H1 (cell line): ENCODE measurements at regions of chr10 and their contacts with region 1.

Region 1: GRCh38 chr10:100481462-100482081 is 18.8 kb downstream of the WNT8B start:
- DNase-seq: peak; percentile 77 to 97
- H3K4me3 ChIP-seq: peak overlapping the region; percentile 35 to 59 (median 53)
- H3K27ac ChIP-seq: no peak overlapping the region
- H3K4me1 ChIP-seq: peaks cover 11 to 26% (median 19%) of the 10 kb centered on the region in 4 experiments
- H3K27me3 ChIP-seq: peaks cover 59 to 77% (median 70%) of the 10 kb centered on the region in 4 experiments
- CTCF ChIP-seq: peak in 2 of 3 experiments; percentile 4 to 7; a peak in 1 of 4 replicates
- EP300 ChIP-seq: no peak
- POLR2A ChIP-seq: no peak
- RAD21 ChIP-seq: 0 out of 4 replicates have a peak, but pooled peaks of 1 of the 2 experiments have one; percentile 4

Region 2: DNA sequence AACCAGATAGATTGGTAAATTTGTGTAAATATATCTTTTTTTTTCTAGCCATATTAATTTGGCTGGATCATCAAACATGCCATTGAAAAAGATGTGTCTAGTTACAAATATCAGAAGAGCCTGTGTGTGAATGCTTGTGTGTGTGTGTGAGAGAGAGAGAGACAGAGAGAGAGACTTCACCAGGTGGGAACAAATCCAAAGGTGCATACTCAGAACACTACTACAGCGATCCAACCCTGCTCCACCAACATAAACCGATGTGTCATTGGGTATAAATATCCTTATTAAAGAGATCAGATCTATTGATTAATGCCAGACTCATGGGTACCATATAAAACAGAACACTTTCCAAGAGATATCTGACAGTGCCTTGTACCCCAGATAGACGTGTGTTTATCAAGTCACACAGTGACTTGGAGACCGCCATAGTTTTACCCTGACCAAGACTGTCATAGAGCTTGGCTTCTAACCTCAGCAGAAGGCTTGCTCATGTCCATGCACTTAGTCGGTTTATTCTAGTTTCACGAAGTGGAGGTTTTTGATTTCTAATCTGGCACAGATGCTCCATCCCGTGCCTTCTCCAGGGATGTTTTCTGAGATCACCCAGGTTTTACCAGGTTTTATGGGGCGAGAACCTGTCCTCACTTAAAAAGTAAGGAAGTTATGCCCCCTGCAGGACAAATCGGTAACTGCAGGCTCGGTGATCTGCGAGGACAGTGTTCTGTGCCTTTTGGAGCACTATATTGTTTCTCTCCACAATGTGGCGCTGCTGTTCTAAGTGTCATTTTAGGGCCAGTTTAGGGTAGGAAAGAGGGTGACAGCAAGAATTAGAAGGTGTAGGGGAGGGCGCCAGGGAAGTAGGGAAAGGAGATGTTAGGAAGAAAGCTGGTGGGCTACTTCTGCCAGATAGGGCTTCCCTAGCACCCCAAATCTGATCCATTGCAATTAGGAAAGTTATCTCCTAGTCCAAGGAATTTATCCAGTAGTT is 48.0 kb before region 1 on chr10:
- CTCF ChIA-PET with region 1: interaction called, 19 read pairs
- POLR2A ChIA-PET with region 1: no interaction called
- DNase-seq: peak; percentile 95 to 99
- H3K4me3 ChIP-seq: no peak overlapping the region
- H3K27ac ChIP-seq: no peak overlapping the region
- H3K4me1 ChIP-seq: peaks cover 0 to 2% (median 0%) of the 10 kb centered on the region in 4 experiments; a peak in 1 of 7 replicates
- H3K27me3 ChIP-seq: no peaks in the 10 kb centered on the region
- CTCF ChIP-seq: peak; percentile 86 to 100 (median 99)
- EP300 ChIP-seq: no peak
- POLR2A ChIP-seq: no peak
- RAD21 ChIP-seq: peak; percentile 99 to 100

Region 3: GRCh38 chr10:100446130-100446761 is 35.3 kb before region 1 on chr10:
- CTCF ChIA-PET with region 1: interaction called, 19 read pairs
- POLR2A ChIA-PET with region 1: no interaction called
- DNase-seq: no peak
- H3K4me3 ChIP-seq: no peak overlapping the region
- H3K27ac ChIP-seq: no peak overlapping the region
- H3K4me1 ChIP-seq: no peaks in the 10 kb centered on the region
- H3K27me3 ChIP-seq: no peaks in the 10 kb centered on the region; a peak in 1 of 7 replicates
- CTCF ChIP-seq: no peak
- EP300 ChIP-seq: no peak
- POLR2A ChIP-seq: no peak
- RAD21 ChIP-seq: no peak

Region 4: GRCh38 chr10:100470367-100470766 is 11.2 kb before region 1 on chr10:
- CTCF ChIA-PET with region 1: interaction called, 13 read pairs
- POLR2A ChIA-PET with region 1: interaction called, 5 read pairs
- DNase-seq: no peak
- H3K4me3 ChIP-seq: no peak overlapping the region
- H3K27ac ChIP-seq: no peak overlapping the region
- H3K4me1 ChIP-seq: no peaks in the 10 kb centered on the region
- H3K27me3 ChIP-seq: no peaks in the 10 kb centered on the region; a peak in 4 of 7 replicates
- CTCF ChIP-seq: no peak
- EP300 ChIP-seq: no peak
- POLR2A ChIP-seq: no peak
- RAD21 ChIP-seq: no peak

Region 5: DNA sequence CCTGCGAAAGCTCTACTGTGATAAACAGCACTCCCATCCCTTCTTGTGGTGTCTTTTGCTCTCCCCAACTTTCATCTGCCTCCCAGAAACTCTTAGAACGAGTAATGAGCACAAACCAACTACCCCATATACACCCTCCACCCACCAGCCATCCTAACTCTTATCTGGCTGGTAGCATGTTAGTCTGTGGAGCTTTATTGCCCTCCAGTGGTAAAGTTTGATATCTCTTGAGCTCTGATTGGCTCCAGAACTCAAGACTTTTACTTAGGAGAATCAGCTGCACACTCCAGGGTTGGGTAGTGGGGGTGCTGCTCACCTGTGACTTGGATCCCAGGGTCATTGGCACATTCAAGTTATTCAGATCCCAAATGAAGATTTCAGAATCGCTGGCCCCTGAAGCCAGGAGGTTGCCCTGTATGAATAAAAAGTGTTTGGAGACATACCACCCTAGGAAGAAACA is 27.1 kb after region 1 on chr10:
- CTCF ChIA-PET with region 1: interaction called, 163 read pairs
- POLR2A ChIA-PET with region 1: interaction called, 9 read pairs
- DNase-seq: no peak
- H3K4me3 ChIP-seq: no peak overlapping the region
- H3K27ac ChIP-seq: no peak overlapping the region
- H3K4me1 ChIP-seq: no peaks in the 10 kb centered on the region; a peak in 1 of 7 replicates
- H3K27me3 ChIP-seq: peaks cover 0 to 11% (median 4%) of the 10 kb centered on the region in 4 experiments; a peak in 3 of 7 replicates
- CTCF ChIP-seq: peak in 2 of 3 experiments; percentile 81 to 88; a peak in 3 of 4 replicates
- EP300 ChIP-seq: no peak
- POLR2A ChIP-seq: no peak
- RAD21 ChIP-seq: peak; percentile 95 to 98